A549 (cell line): ENCODE measurements at regions of chr5 and their contacts with region 1.

Region 1: DNA sequence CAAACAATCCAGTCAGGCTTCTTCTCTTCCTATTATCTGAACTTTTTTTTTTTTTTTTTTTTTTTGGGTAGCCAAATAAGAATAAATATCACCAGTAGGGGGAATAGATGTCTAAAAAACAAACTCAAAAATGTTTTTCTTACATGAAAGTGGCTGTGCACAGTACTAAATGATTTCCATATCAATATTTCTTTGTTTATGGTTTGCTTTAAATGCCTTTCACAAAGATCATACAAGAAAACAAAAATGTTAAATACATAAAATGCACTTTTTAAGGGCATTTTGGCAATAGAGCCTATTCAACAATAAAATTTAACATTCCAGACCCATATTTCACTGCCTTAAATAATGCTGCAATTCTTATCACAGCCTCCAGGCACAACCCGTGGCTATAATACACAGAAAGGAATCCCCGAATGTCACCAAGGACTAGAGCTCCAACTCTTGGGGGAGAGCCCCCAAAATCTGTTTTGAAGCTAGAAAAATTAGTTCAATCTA is 91.1 kb upstream of the TBCA start:
- DNase-seq: peak; percentile 30 to 46
- ATAC-seq: peak; percentile 84 to 93; a peak in 5 of 6 replicates
- H3K4me3 ChIP-seq: no peak overlapping the region
- H3K27ac ChIP-seq: no peak overlapping the region
- H3K4me1 ChIP-seq: peaks cover 5% of the 10 kb centered on the region; the same call in 1 of the 3 replicates
- CTCF ChIP-seq: peak; percentile 41; the same call in 2 of the 3 replicates
- EP300 ChIP-seq: no peak
- POLR2A ChIP-seq: no peak
- RAD21 ChIP-seq: peak; percentile 50 to 59

Region 2: GRCh38 chr5:77844623-77845323 is 22.5 kb before region 1 on chr5:
- CTCF ChIA-PET with region 1: no interaction called
- POLR2A ChIA-PET with region 1: no interaction called
- DNase-seq: no peak
- ATAC-seq: no peak
- H3K4me3 ChIP-seq: no peak overlapping the region
- H3K27ac ChIP-seq: no peak overlapping the region
- H3K4me1 ChIP-seq: no peaks in the 10 kb centered on the region
- CTCF ChIP-seq: no peak
- EP300 ChIP-seq: no peak
- POLR2A ChIP-seq: no peak
- RAD21 ChIP-seq: no peak

Region 3: GRCh38 chr5:77981818-77982217 is 114.6 kb after region 1 on chr5:
- CTCF ChIA-PET with region 1: interaction called, 24 read pairs
- POLR2A ChIA-PET with region 1: no interaction called
- DNase-seq: peak in 1 of 2 experiments; percentile 5
- ATAC-seq: peak; percentile 32 to 69; a peak in 3 of 6 replicates
- H3K4me3 ChIP-seq: no peak overlapping the region
- H3K27ac ChIP-seq: no peak overlapping the region
- H3K4me1 ChIP-seq: no peaks in the 10 kb centered on the region
- CTCF ChIP-seq: 0 out of 3 replicates have a peak, but pooled peaks have one; percentile 8
- EP300 ChIP-seq: no peak
- POLR2A ChIP-seq: no peak
- RAD21 ChIP-seq: peak; percentile 24 to 49; a peak in 2 of 5 replicates

Region 4: GRCh38 chr5:78001197-78001596 is 134.0 kb after region 1 on chr5:
- CTCF ChIA-PET with region 1: interaction called, 10 read pairs
- POLR2A ChIA-PET with region 1: no interaction called
- DNase-seq: no peak
- ATAC-seq: no peak
- H3K4me3 ChIP-seq: no peak overlapping the region
- H3K27ac ChIP-seq: no peak overlapping the region
- H3K4me1 ChIP-seq: no peaks in the 10 kb centered on the region
- CTCF ChIP-seq: no peak
- EP300 ChIP-seq: no peak
- POLR2A ChIP-seq: no peak
- RAD21 ChIP-seq: no peak

Region 5: DNA sequence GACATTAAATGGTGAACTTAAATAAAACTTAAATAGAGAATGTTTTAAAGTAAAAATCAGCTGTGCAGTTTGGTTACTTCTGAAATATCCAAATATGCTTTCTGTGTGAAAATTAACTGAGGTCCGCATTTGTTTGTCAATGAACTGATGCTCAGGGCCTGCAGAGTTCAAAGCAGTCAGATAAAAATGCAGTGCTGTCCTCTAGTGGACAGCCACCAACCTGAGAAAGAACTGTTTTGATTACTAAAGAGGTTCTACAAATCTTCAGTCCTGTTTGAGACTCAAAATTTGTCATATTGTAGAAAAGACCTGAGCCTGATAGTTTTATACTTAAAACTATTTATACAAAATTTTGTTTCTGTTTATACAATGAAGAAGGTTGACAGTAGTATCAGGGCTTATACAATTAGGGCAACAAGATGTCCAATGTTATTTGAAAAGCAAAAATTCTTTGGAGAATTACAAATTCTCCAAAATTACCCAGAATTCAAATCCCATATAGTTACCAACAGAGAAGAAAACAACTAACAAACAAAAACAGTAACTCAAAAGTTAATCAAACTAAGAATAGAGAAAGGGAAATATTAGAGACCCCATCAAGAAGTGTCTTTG is 141.2 kb after region 1 on chr5:
- CTCF ChIA-PET with region 1: interaction called, 11 read pairs
- POLR2A ChIA-PET with region 1: no interaction called
- DNase-seq: peak; percentile 41 to 67
- ATAC-seq: peak; percentile 78 to 88; a peak in 4 of 6 replicates
- H3K4me3 ChIP-seq: no peak overlapping the region
- H3K27ac ChIP-seq: no peak overlapping the region
- H3K4me1 ChIP-seq: 0 out of 3 replicates have a peak, but pooled peaks cover 2% of the 10 kb centered on the region
- CTCF ChIP-seq: peak; percentile 96
- EP300 ChIP-seq: no peak
- POLR2A ChIP-seq: no peak
- RAD21 ChIP-seq: peak; percentile 93